CD8-positive, alpha-beta T cell (primary cell): ENCODE measurements at regions of chr6 and their contacts with region 1.

Region 1: GRCh38 chr6:67694120-67694519 is 941.0 kb upstream of the ADGRB3 start:
- DNase-seq: no peak
- ATAC-seq: no peak
- H3K4me3 ChIP-seq: no peak overlapping the region
- H3K4me3 Mint-ChIP-seq: no peak overlapping the region
- H3K27ac ChIP-seq: no peak overlapping the region
- H3K27ac Mint-ChIP-seq: no peak overlapping the region
- H3K4me1 ChIP-seq: no peaks in the 10 kb centered on the region
- H3K4me1 Mint-ChIP-seq: no peaks in the 10 kb centered on the region
- H3K27me3 ChIP-seq: no peaks in the 10 kb centered on the region
- H3K27me3 Mint-ChIP-seq: no peaks in the 10 kb centered on the region
- CTCF ChIP-seq: no peak

Region 2: DNA sequence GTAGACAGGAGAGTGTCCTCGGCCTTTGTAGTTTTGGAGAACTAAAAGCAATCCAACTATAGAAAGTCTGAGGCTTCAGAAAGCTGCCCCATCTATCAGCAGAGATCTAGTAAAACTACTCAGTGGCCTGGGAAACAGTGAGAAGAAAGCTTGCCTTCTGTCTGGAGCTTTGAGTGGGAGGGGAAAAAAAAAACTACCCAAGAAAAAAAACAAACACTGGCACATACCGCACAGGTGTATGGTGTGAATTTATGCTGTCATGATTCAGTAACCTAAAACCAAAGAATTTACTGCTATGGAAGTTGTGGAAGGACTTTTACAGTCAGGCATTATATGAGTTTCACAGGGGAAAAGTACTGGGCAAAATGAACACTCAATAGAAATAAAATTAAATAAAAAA is 1221.5 kb after region 1 on chr6:
- CTCF ChIA-PET with region 1: no interaction called
- POLR2A ChIA-PET with region 1: no interaction called
- intact Hi-C with region 1: loop called in 1 of 2 experiments (anchors 10 kb)
- DNase-seq: no peak
- ATAC-seq: no peak
- H3K4me3 ChIP-seq: no peak overlapping the region
- H3K4me3 Mint-ChIP-seq: no peak overlapping the region
- H3K27ac ChIP-seq: no peak overlapping the region
- H3K27ac Mint-ChIP-seq: no peak overlapping the region
- H3K4me1 ChIP-seq: no peaks in the 10 kb centered on the region
- H3K4me1 Mint-ChIP-seq: no peaks in the 10 kb centered on the region
- H3K27me3 ChIP-seq: no peaks in the 10 kb centered on the region
- H3K27me3 Mint-ChIP-seq: no peaks in the 10 kb centered on the region
- CTCF ChIP-seq: no peak